Gastrocnemius medialis (tissue), 4 donors: ENCODE measurements at regions of chr5 and their contacts with region 1.

Region 1: DNA sequence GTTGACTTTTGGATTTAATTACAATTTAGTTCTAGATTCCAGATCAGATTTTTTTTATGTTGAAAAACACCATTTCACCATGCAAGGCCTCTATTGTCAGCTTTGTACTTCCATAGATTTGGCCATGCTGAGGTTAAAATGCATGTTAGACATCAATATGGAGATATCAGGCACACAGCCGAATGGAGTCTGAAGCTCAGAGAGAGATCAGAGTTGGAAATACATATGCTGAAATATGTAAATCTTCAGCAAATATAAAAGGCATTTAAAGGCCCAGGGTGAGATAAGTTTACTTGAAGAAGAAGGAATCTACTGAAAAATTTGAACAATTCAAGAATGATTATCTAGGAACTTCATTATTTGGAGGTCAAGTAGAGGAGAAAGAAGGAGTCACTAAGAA is 139.6 kb downstream of the CHSY3 start:
- DNase-seq: no peak
- ATAC-seq: no peak
- H3K4me3 ChIP-seq: no peak overlapping the region
- H3K27ac ChIP-seq: no peak overlapping the region
- H3K4me1 ChIP-seq: no peaks in the 10 kb centered on the region
- H3K27me3 ChIP-seq: no peaks in the 10 kb centered on the region
- CTCF ChIP-seq: no peak
- POLR2A ChIP-seq: no peak

Region 2: DNA sequence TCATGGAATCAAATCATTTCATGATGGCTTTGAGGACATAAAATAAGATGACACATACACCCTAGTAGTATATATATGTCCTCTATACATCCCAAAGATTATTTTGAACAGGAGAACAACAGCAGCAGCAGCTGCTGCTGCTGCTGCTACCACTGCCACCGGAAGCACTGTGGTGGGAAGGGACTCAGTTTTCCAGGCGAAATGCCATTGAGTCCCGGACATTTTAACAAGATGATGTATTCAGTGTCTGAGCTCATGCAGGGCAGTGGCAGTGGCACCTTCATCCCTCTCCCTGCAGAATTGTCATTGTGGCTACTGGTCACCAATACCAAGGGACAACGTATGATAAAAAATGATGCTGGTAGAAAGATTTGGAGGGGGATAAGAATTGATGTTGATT is 11.7 kb after region 1 on chr5:
- in situ Hi-C with region 1: no loop called
- intact Hi-C with region 1: no loop called
- DNase-seq: no peak
- ATAC-seq: no peak
- H3K4me3 ChIP-seq: no peak overlapping the region
- H3K27ac ChIP-seq: no peak overlapping the region
- H3K4me1 ChIP-seq: no peaks in the 10 kb centered on the region
- H3K27me3 ChIP-seq: no peaks in the 10 kb centered on the region
- CTCF ChIP-seq: no peak
- POLR2A ChIP-seq: no peak

Region 3: GRCh38 chr5:130251931-130252330 is 208.1 kb after region 1 on chr5:
- in situ Hi-C with region 1: no loop called
- intact Hi-C with region 1: no loop called
- DNase-seq: no peak
- ATAC-seq: no peak
- H3K4me3 ChIP-seq: no peak overlapping the region
- H3K27ac ChIP-seq: no peak overlapping the region
- H3K4me1 ChIP-seq: no peaks in the 10 kb centered on the region
- H3K27me3 ChIP-seq: no peaks in the 10 kb centered on the region
- CTCF ChIP-seq: no peak
- POLR2A ChIP-seq: no peak

Region 4: GRCh38 chr5:130514984-130515690 is 471.3 kb after region 1 on chr5:
- in situ Hi-C with region 1: no loop called
- intact Hi-C with region 1: no loop called
- DNase-seq: no peak
- ATAC-seq: no peak
- H3K4me3 ChIP-seq: no peak overlapping the region
- H3K27ac ChIP-seq: no peak overlapping the region
- H3K4me1 ChIP-seq: no peaks in the 10 kb centered on the region
- H3K27me3 ChIP-seq: no peaks in the 10 kb centered on the region
- CTCF ChIP-seq: no peak
- POLR2A ChIP-seq: no peak

Region 5: DNA sequence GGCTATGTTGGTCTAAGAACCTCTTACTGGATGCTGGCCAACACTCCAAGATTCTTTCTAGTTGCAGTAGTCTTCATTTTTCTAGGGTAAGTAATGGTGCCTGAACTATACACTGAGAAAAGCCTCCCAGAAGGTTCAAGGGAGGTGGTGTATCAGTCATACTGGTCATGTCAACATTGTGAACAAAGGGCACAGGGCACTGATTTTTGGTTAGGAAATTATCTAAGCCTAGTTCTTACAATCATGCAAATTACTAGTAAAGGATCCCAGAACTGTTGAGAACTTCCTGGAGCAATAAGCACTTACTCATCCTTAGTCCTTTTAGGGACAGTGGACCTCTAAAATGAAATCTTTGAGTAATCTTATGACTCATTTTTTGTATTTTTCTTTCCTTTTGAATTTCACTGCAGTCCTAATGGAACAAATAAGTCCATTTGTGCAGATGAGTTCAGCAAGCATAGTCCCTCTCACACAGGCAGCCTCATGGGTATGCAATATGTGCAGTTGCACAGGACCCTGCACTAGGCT is 1199.0 kb after region 1 on chr5:
- in situ Hi-C with region 1: no loop called
- intact Hi-C with region 1: loop called (anchors 5 kb)
- DNase-seq: no peak
- ATAC-seq: no peak
- H3K4me3 ChIP-seq: no peak overlapping the region
- H3K27ac ChIP-seq: no peak overlapping the region
- H3K4me1 ChIP-seq: no peaks in the 10 kb centered on the region
- H3K27me3 ChIP-seq: no peaks in the 10 kb centered on the region
- CTCF ChIP-seq: no peak
- POLR2A ChIP-seq: no peak